Mammary epithelial cell (primary cell): ENCODE measurements at regions of chr10 and their contacts with region 1.

Region 1: GRCh38 chr10:86688398-86688921 is 20.1 kb downstream of the LDB3 start:
- DNase-seq: peak; percentile 50
- H3K4me3 ChIP-seq: no peak overlapping the region
- H3K27ac ChIP-seq: no peak overlapping the region
- H3K4me1 ChIP-seq: no peaks in the 10 kb centered on the region
- H3K27me3 ChIP-seq: no peaks in the 10 kb centered on the region
- CTCF ChIP-seq: peak; percentile 69 to 92

Region 2: GRCh38 chr10:86046845-86047460 is 641.5 kb before region 1 on chr10:
- CTCF ChIA-PET with region 1: no interaction called
- dilution Hi-C with region 1: no loop called
- in situ Hi-C with region 1: no loop called
- intact Hi-C with region 1: no loop called
- DNase-seq: no peak
- H3K4me3 ChIP-seq: no peak overlapping the region
- H3K27ac ChIP-seq: no peak overlapping the region
- H3K4me1 ChIP-seq: no peaks in the 10 kb centered on the region
- H3K27me3 ChIP-seq: no peaks in the 10 kb centered on the region
- CTCF ChIP-seq: no peak

Region 3: GRCh38 chr10:86521678-86522509 is 166.6 kb before region 1 on chr10 and contains the start of gene WAPL:
- CTCF ChIA-PET with region 1: no interaction called
- dilution Hi-C with region 1: no loop called
- in situ Hi-C with region 1: no loop called
- intact Hi-C with region 1: loop called (anchors 5 kb)
- DNase-seq: peak; percentile 92
- H3K4me3 ChIP-seq: peak within 1 kb of the TSS; percentile 84 to 96 (median 96)
- H3K27ac ChIP-seq: peak within 1 kb of the TSS; percentile 77
- H3K4me1 ChIP-seq: peaks cover 10% of the 10 kb centered on the region
- H3K27me3 ChIP-seq: no peaks in the 10 kb centered on the region
- CTCF ChIP-seq: no peak
- total RNA-seq, gene WAPL: 37.5 to 37.8 TPM

Region 4: GRCh38 chr10:86599729-86600128 is 88.7 kb before region 1 on chr10:
- CTCF ChIA-PET with region 1: no interaction called
- dilution Hi-C with region 1: loop called (anchors 5 kb)
- in situ Hi-C with region 1: no loop called
- intact Hi-C with region 1: no loop called
- DNase-seq: no peak
- H3K4me3 ChIP-seq: no peak overlapping the region
- H3K27ac ChIP-seq: no peak overlapping the region
- H3K4me1 ChIP-seq: peaks cover 7% of the 10 kb centered on the region
- H3K27me3 ChIP-seq: no peaks in the 10 kb centered on the region
- CTCF ChIP-seq: no peak

Region 5: GRCh38 chr10:86899670-86900276 is 211.3 kb after region 1 on chr10:
- CTCF ChIA-PET with region 1: no interaction called
- dilution Hi-C with region 1: no loop called
- in situ Hi-C with region 1: no loop called
- intact Hi-C with region 1: loop called (anchors 1 kb)
- DNase-seq: peak; percentile 44
- H3K4me3 ChIP-seq: no peak overlapping the region
- H3K27ac ChIP-seq: no peak overlapping the region
- H3K4me1 ChIP-seq: no peaks in the 10 kb centered on the region
- H3K27me3 ChIP-seq: no peaks in the 10 kb centered on the region
- CTCF ChIP-seq: peak; percentile 72 to 88

Region 6: DNA sequence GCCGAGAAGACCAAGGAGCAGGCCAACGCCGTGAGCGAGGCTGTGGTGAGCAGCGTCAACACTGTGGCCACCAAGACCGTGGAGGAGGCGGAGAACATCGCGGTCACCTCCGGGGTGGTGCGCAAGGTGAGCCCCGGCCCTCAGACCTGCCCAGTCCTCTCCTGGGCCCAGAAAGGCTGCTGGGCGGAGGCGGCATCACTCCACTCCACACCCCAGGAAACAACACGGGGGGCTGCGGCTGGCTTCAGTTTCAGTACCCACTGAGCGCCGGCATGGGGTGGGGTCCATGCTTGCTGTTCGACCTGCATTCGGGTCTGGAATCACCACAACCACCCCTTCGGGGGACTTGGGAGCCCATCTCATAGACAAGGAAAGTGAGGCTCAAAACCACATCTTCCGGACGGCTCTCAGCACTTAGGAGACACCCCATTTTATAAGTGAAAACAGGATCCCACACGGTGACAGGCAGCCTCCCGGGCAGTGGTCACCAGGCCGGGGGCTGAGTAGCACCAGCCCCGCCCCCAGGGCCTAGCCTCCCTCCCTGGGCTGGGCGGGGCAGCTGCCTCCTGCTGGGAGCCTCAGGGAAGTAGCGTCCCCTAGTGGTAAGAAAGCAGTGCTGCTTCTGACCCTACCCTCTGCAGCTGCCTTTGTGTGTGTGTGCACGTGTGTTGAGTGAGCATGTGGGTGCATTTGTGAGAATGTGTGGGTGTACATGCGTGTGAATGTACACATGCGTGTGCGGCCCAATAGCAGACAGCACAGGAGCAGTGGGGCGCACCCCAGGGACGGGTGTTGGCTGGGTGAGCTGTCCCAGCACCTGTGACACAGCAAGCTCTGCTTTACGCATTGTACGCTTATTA is 271.8 kb after region 1 on chr10:
- CTCF ChIA-PET with region 1: interaction called, 3 read pairs
- dilution Hi-C with region 1: no loop called
- in situ Hi-C with region 1: no loop called
- intact Hi-C with region 1: loop called (anchors 1 kb)
- DNase-seq: peak; percentile 49
- H3K4me3 ChIP-seq: no peak overlapping the region
- H3K27ac ChIP-seq: peak overlapping the region; percentile 71
- H3K4me1 ChIP-seq: peaks cover 51% of the 10 kb centered on the region
- H3K27me3 ChIP-seq: no peaks in the 10 kb centered on the region
- CTCF ChIP-seq: peak; percentile 99 to 100